GM12878 (cell line): ENCODE measurements at regions of chr7 and their contacts with region 1.

Region 1: GRCh38 chr7:31796375-31796774 is 109.4 kb downstream of the PPP1R17 start:
- DNase-seq: no peak
- ATAC-seq: no peak
- H3K4me3 ChIP-seq: no peak overlapping the region
- H3K27ac ChIP-seq: no peak overlapping the region
- H3K4me1 ChIP-seq: no peaks in the 10 kb centered on the region
- H3K27me3 ChIP-seq: no peaks in the 10 kb centered on the region
- CTCF ChIP-seq: no peak
- EP300 ChIP-seq: no peak
- POLR2A ChIP-seq: no peak
- RAD21 ChIP-seq: no peak

Region 2: DNA sequence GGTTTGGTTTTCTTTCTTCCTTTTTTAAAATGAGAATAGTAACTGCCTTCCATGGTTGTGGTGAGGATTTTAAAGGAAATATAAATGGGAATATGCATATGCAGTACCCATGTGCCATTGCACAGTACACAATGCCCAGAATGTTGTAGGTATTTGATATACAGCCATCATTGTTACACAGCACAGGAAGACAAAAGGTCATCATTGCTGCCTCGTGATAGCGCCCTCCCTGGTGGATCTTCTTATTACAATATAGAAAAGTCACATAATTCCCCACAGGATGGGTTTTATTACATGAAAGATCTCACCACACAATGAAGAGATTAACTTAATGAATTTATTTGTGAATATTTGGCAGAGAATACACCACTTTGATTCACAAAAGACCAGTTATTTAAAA is 32.8 kb before region 1 on chr7:
- CTCF ChIA-PET with region 1: no interaction called
- POLR2A ChIA-PET with region 1: no interaction called
- RAD21 ChIA-PET with region 1: no interaction called
- SMC1A ChIA-PET with region 1: no interaction called
- in situ Hi-C with region 1: no loop called
- intact Hi-C with region 1: no loop called
- DNase-seq: no peak
- ATAC-seq: no peak
- H3K4me3 ChIP-seq: no peak overlapping the region
- H3K27ac ChIP-seq: no peak overlapping the region
- H3K4me1 ChIP-seq: no peaks in the 10 kb centered on the region
- H3K27me3 ChIP-seq: no peaks in the 10 kb centered on the region; a peak in 1 of 4 replicates
- CTCF ChIP-seq: peak; percentile 11 to 27 (median 20); a peak in 4 of 6 replicates
- EP300 ChIP-seq: no peak
- POLR2A ChIP-seq: no peak
- RAD21 ChIP-seq: no peak

Region 3: DNA sequence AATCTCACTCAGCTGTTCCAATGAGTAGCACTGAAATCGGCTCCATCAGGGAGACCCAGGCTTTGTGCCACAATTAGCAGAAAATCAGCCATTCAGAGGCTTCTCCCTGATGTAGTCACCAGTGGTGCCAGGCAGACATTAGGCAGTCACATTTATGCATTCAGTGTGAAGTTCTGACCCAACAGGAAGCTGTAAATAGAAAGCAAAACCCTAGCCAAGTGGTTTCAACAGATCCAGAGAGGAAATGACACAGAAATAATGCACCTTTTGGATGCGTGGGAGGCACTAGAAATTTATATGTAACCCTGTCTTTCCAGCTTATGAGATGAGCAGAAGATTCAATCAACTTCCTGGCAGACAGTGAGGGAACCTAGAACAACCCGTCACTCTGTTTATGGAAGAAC is 87.4 kb after region 1 on chr7:
- CTCF ChIA-PET with region 1: no interaction called
- POLR2A ChIA-PET with region 1: no interaction called
- RAD21 ChIA-PET with region 1: no interaction called
- SMC1A ChIA-PET with region 1: no interaction called
- in situ Hi-C with region 1: no loop called
- intact Hi-C with region 1: loop called (anchors 5 kb)
- DNase-seq: no peak
- ATAC-seq: peak; percentile 98
- H3K4me3 ChIP-seq: no peak overlapping the region
- H3K27ac ChIP-seq: no peak overlapping the region
- H3K4me1 ChIP-seq: peaks cover 10% of the 10 kb centered on the region
- H3K27me3 ChIP-seq: no peaks in the 10 kb centered on the region
- CTCF ChIP-seq: no peak
- EP300 ChIP-seq: no peak
- POLR2A ChIP-seq: no peak
- RAD21 ChIP-seq: no peak